ENCODE measurements at regions of chrX and their contacts with region 1.

Region 1: GRCh38 chrX:110082161-110082560 is 79.2 kb downstream of the TMEM164 start:
- DNase-seq: no peak
- ATAC-seq: peak; percentile 80 to 90 (median 85)
- H3K4me3 ChIP-seq: no peak overlapping the region
- H3K27ac ChIP-seq: peak overlapping the region; percentile 14 to 85 (median 40)
- H3K4me1 ChIP-seq: peaks cover 0 to 30% (median 5%) of the 10 kb centered on the region in 12 donors
- H3K27me3 ChIP-seq: peaks cover 0 to 6% (median 0%) of the 10 kb centered on the region in 9 donors
- CTCF ChIP-seq: no peak
- POLR2A ChIP-seq: no peak

Region 2: DNA sequence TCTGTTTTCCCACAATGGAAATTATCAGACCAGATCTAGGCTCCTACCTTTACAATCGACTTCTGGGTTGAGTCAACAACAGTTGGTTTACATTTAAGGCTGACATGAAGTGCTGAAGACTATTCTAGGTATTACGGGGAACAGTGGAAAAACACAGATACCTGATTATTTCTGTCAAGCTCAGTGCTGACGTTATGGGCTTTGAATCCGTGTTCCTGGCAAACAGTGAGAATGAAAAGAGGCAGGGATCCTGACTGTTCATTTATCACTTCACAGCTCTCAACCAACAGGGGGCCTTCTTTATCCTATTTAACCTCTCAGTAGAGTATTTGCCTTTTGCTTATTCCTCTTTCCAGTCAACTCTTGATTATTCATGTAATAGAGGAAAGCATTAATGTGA is 36.2 kb before region 1 on chrX:
- intact Hi-C with region 1: loop called in 1 of 10 experiments (anchors 5 kb)
- DNase-seq: no peak
- ATAC-seq: peak; percentile 53 to 78 (median 64)
- H3K4me3 ChIP-seq: peak overlapping the region in 6 of 12 donors; percentile 14 to 42 (median 22)
- H3K27ac ChIP-seq: peak overlapping the region; percentile 24 to 88 (median 68)
- H3K4me1 ChIP-seq: peaks cover 0 to 30% (median 5%) of the 10 kb centered on the region in 12 donors
- H3K27me3 ChIP-seq: peaks cover 0 to 11% (median 0%) of the 10 kb centered on the region in 9 donors
- CTCF ChIP-seq: peak in 5 of 12 donors; percentile 9 to 30 (median 17)
- POLR2A ChIP-seq: no peak

Measured in heart left ventricle (tissue), 16 donors.